ENCODE measurements at regions of chr17 and their contacts with region 1.

Region 1: GRCh38 chr17:49677933-49678847 is at the start of gene SPOP:
- DNase-seq: peak; percentile 99 to 100
- ATAC-seq: peak; percentile 88 to 91
- H3K4me3 ChIP-seq: peak within 1 kb of the TSS; percentile 70 to 91 (median 76)
- H3K27ac ChIP-seq: peak within 1 kb of the TSS; percentile 97 to 100 (median 100)
- H3K4me1 ChIP-seq: peaks cover 33 to 40% of the 10 kb centered on the region in 2 donors
- H3K27me3 ChIP-seq: no peaks in the 10 kb centered on the region
- CTCF ChIP-seq: no peak
- POLR2A ChIP-seq: peak in 1 of 2 donors; percentile 5
- total RNA-seq, gene SPOP: 27.5 to 57.5 (median 53.5) TPM

Region 2: GRCh38 chr17:48944519-48945260 is 733.5 kb before region 1 on chr17 and contains the start of gene SNF8:
- in situ Hi-C with region 1: no loop called
- intact Hi-C with region 1: loop called (anchors 10 kb)
- DNase-seq: peak; percentile 65 to 83
- ATAC-seq: peak; percentile 90 to 92
- H3K4me3 ChIP-seq: peak within 1 kb of the TSS; percentile 84 to 95 (median 87)
- H3K27ac ChIP-seq: peak within 1 kb of the TSS; percentile 83 to 88 (median 84)
- H3K4me1 ChIP-seq: peaks cover 10 to 18% of the 10 kb centered on the region in 2 donors
- H3K27me3 ChIP-seq: peaks cover 0 to 4% (median 3%) of the 10 kb centered on the region in 3 donors
- CTCF ChIP-seq: no peak
- POLR2A ChIP-seq: peak; percentile 69 to 79
- total RNA-seq, gene SNF8: 64.9 to 123 (median 76.8) TPM

Region 3: DNA sequence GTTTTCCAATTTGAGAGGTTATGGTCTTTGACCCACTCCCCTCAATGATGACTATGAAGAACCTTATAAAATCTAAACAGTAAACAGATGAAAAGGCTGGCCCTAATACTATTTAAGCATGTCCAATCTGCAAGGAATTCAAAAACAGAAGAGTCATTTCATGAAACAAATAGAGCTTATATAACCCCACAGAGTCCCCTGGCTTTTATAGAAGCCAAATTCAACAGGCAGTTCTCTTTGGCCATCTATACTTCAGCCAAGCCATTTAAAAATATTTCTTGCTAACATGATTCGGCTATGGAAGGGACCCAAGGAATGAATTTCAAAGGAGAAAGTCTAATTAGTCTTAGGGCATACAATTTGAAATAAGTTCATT is 43.7 kb before region 1 on chr17:
- in situ Hi-C with region 1: no loop called
- intact Hi-C with region 1: loop called (anchors 5 kb)
- DNase-seq: no peak
- ATAC-seq: no peak
- H3K4me3 ChIP-seq: no peak overlapping the region
- H3K27ac ChIP-seq: peak overlapping the region; percentile 84 to 85 (median 84)
- H3K4me1 ChIP-seq: peaks cover 66 to 83% of the 10 kb centered on the region in 2 donors
- H3K27me3 ChIP-seq: no peaks in the 10 kb centered on the region
- CTCF ChIP-seq: no peak
- POLR2A ChIP-seq: no peak

Region 4: GRCh38 chr17:49646391-49647255 is 31.6 kb before region 1 on chr17:
- in situ Hi-C with region 1: no loop called
- intact Hi-C with region 1: loop called (anchors 2 kb)
- DNase-seq: peak; percentile 63 to 90
- ATAC-seq: peak; percentile 85 to 88
- H3K4me3 ChIP-seq: peak overlapping the region in 3 of 4 donors; percentile 31 to 44 (median 35)
- H3K27ac ChIP-seq: peak overlapping the region; percentile 78 to 92 (median 88)
- H3K4me1 ChIP-seq: peaks cover 47 to 48% of the 10 kb centered on the region in 2 donors
- H3K27me3 ChIP-seq: no peaks in the 10 kb centered on the region
- CTCF ChIP-seq: no peak
- POLR2A ChIP-seq: no peak

Measured in gastrocnemius medialis (tissue), 4 donors.